CD8-positive, alpha-beta T cell (primary cell): ENCODE measurements at regions of chr7 and their contacts with region 1.

Region 1: DNA sequence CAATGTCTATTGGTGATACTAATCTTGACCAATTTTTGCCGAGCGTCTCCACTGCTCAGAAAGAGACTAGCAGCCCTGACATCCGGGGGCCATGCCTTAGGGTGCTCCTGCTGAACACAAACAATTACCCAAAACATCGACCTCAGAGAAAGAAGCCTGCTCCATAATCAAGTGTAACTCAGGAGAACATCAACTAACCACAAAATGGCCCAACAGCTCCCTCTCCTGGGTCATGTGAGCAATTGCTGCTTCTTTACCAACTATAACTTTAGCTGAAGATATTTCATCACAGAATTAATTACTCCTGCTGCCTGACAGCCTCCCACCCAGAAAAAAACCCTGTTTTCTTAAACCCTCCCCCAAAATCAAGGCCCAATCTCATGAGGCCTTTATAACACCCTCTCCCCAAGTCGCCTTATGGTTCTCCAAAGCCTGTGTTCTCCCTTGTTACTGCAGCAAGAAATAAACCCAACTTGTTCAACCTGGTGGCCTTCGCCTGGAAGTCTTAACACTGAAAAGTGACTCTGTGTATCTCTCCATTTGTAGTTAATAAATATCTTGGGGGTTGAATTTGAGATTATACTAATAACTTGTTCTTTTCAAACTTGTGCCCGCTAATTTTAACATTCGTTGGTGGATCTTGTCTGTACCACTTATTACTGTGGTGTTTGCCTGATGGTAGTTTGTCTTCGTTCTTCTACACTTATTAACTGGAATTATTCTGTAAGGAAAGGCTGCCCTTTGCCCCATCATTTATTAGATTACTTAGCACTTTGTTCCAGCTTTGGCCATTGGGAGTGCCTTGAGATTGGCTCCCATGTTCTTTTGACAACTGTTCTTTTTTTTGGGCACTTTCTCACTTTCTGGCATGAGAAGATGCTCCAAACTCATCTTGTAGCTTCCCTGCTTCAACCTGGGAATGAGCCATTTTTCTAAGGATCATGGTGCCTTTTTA is 21.2 kb upstream of the RAMP3 start:
- DNase-seq: peak; percentile 41 to 89 (median 66)
- ATAC-seq: peak; percentile 97
- H3K4me3 ChIP-seq: no peak overlapping the region
- H3K4me3 Mint-ChIP-seq: no peak overlapping the region
- H3K27ac ChIP-seq: no peak overlapping the region
- H3K27ac Mint-ChIP-seq: no peak overlapping the region
- H3K4me1 ChIP-seq: peaks cover 3% of the 10 kb centered on the region
- H3K4me1 Mint-ChIP-seq: peaks cover 4% of the 10 kb centered on the region
- H3K27me3 ChIP-seq: no peaks in the 10 kb centered on the region
- H3K27me3 Mint-ChIP-seq: peaks cover 4% of the 10 kb centered on the region
- CTCF ChIP-seq: peak; percentile 92

Region 2: DNA sequence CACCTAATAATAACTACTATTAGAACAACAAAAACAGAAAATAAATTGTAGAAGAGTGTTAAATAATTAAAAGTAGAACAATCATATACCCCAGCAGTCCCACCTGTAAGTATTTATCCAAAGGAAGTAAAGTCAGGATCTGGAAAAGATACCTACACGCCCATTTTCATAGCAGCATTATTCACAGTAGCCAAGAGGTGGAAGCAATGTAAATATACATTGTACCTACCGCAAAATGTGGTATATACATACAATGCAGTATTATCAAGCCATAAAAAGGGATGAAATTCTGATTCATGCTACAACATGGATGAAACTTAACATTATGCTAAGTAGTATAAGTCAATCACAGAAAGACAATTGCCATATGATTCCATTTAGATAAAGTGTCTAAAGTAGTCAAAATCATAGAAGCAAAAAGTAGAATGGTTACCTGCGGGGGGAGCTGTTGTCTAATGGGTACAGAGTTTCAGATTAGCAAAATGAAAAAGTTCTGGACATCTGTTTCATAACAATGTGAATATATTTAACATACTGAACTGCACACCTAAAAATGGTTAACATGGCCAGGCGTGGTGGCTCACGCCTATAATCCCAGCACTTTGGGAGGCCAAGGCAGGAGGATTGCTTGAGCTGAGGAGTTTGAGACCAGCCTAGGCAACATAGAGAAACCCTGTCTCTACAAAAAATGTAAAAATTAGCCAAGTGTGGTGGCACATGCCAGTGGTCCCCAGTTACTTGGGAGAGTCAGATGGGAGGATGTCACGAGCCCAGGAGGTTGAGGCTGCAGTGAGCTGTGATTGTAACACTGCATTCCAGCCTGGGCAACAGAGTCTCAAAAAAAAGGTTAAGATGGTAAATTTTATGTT is 548.3 kb before region 1 on chr7:
- CTCF ChIA-PET with region 1: interaction called, 8 read pairs
- POLR2A ChIA-PET with region 1: no interaction called
- intact Hi-C with region 1: loop called (anchors 1 to 2 kb)
- DNase-seq: peak; percentile 34 to 79 (median 63)
- ATAC-seq: peak; percentile 81
- H3K4me3 ChIP-seq: no peak overlapping the region
- H3K4me3 Mint-ChIP-seq: no peak overlapping the region
- H3K27ac ChIP-seq: no peak overlapping the region
- H3K27ac Mint-ChIP-seq: no peak overlapping the region
- H3K4me1 ChIP-seq: no peaks in the 10 kb centered on the region
- H3K4me1 Mint-ChIP-seq: peaks cover 6% of the 10 kb centered on the region
- H3K27me3 ChIP-seq: no peaks in the 10 kb centered on the region
- H3K27me3 Mint-ChIP-seq: no peaks in the 10 kb centered on the region
- CTCF ChIP-seq: peak; percentile 68

Region 3: GRCh38 chr7:44921607-44922359 is 214.6 kb before region 1 on chr7:
- CTCF ChIA-PET with region 1: interaction called, 40 read pairs
- POLR2A ChIA-PET with region 1: interaction called, 4 read pairs
- intact Hi-C with region 1: loop called (anchors 1 to 5 kb)
- DNase-seq: peak; percentile 88 to 99 (median 92)
- ATAC-seq: peak; percentile 94
- H3K4me3 ChIP-seq: no peak overlapping the region
- H3K4me3 Mint-ChIP-seq: no peak overlapping the region
- H3K27ac ChIP-seq: no peak overlapping the region
- H3K27ac Mint-ChIP-seq: no peak overlapping the region
- H3K4me1 ChIP-seq: no peaks in the 10 kb centered on the region
- H3K4me1 Mint-ChIP-seq: peaks cover 5% of the 10 kb centered on the region
- H3K27me3 ChIP-seq: peaks cover 0 to 2% of the 10 kb centered on the region in 2 experiments
- H3K27me3 Mint-ChIP-seq: peaks cover under 1% of the 10 kb centered on the region
- CTCF ChIP-seq: peak; percentile 87

Region 4: GRCh38 chr7:44980393-44981034 is 155.9 kb before region 1 on chr7:
- CTCF ChIA-PET with region 1: interaction called, 157 read pairs
- POLR2A ChIA-PET with region 1: interaction called, 3 read pairs
- intact Hi-C with region 1: no loop called
- DNase-seq: peak in 6 of 9 experiments; percentile 40 to 95 (median 76)
- ATAC-seq: peak; percentile 43
- H3K4me3 ChIP-seq: no peak overlapping the region
- H3K4me3 Mint-ChIP-seq: peak overlapping the region; percentile 94
- H3K27ac ChIP-seq: peak overlapping the region; percentile 78 to 86
- H3K27ac Mint-ChIP-seq: peak overlapping the region; percentile 99
- H3K4me1 ChIP-seq: peaks cover 72% of the 10 kb centered on the region
- H3K4me1 Mint-ChIP-seq: peaks cover 80% of the 10 kb centered on the region
- H3K27me3 ChIP-seq: no peaks in the 10 kb centered on the region
- H3K27me3 Mint-ChIP-seq: no peaks in the 10 kb centered on the region
- CTCF ChIP-seq: no peak

Region 5: GRCh38 chr7:45033261-45033930 is 103.0 kb before region 1 on chr7:
- CTCF ChIA-PET with region 1: interaction called, 13 read pairs
- POLR2A ChIA-PET with region 1: no interaction called
- intact Hi-C with region 1: no loop called
- DNase-seq: peak in 3 of 9 experiments; percentile 20 to 53 (median 34)
- ATAC-seq: peak; percentile 34
- H3K4me3 ChIP-seq: peak overlapping the region in 1 of 2 experiments; percentile 18
- H3K4me3 Mint-ChIP-seq: peak overlapping the region; percentile 75
- H3K27ac ChIP-seq: peak overlapping the region; percentile 11 to 51
- H3K27ac Mint-ChIP-seq: peak overlapping the region; percentile 91
- H3K4me1 ChIP-seq: peaks cover 77% of the 10 kb centered on the region
- H3K4me1 Mint-ChIP-seq: peaks cover 80% of the 10 kb centered on the region
- H3K27me3 ChIP-seq: no peaks in the 10 kb centered on the region
- H3K27me3 Mint-ChIP-seq: no peaks in the 10 kb centered on the region
- CTCF ChIP-seq: no peak

Region 6: GRCh38 chr7:45080265-45080962 is 56.0 kb before region 1 on chr7:
- CTCF ChIA-PET with region 1: interaction called, 19 read pairs
- POLR2A ChIA-PET with region 1: no interaction called
- intact Hi-C with region 1: loop called (anchors 1 kb)
- DNase-seq: no peak
- ATAC-seq: peak; percentile 38
- H3K4me3 ChIP-seq: no peak overlapping the region
- H3K4me3 Mint-ChIP-seq: no peak overlapping the region
- H3K27ac ChIP-seq: no peak overlapping the region
- H3K27ac Mint-ChIP-seq: peak overlapping the region; percentile 76
- H3K4me1 ChIP-seq: no peaks in the 10 kb centered on the region
- H3K4me1 Mint-ChIP-seq: peaks cover 3% of the 10 kb centered on the region
- H3K27me3 ChIP-seq: no peaks in the 10 kb centered on the region
- H3K27me3 Mint-ChIP-seq: no peaks in the 10 kb centered on the region
- CTCF ChIP-seq: no peak

Region 7: GRCh38 chr7:45117383-45117981 is 18.9 kb before region 1 on chr7:
- CTCF ChIA-PET with region 1: interaction called, 16 read pairs
- POLR2A ChIA-PET with region 1: no interaction called
- intact Hi-C with region 1: loop called in 1 of 2 experiments (anchors 2 kb)
- DNase-seq: no peak
- ATAC-seq: no peak
- H3K4me3 ChIP-seq: no peak overlapping the region
- H3K4me3 Mint-ChIP-seq: no peak overlapping the region
- H3K27ac ChIP-seq: no peak overlapping the region
- H3K27ac Mint-ChIP-seq: no peak overlapping the region
- H3K4me1 ChIP-seq: peaks cover 7% of the 10 kb centered on the region
- H3K4me1 Mint-ChIP-seq: peaks cover 6% of the 10 kb centered on the region
- H3K27me3 ChIP-seq: no peaks in the 10 kb centered on the region
- H3K27me3 Mint-ChIP-seq: peaks cover 2% of the 10 kb centered on the region
- CTCF ChIP-seq: no peak

Region 8: GRCh38 chr7:45259966-45260646 is 123.7 kb after region 1 on chr7:
- CTCF ChIA-PET with region 1: no interaction called
- POLR2A ChIA-PET with region 1: no interaction called
- intact Hi-C with region 1: no loop called
- DNase-seq: peak; percentile 36 to 81 (median 63)
- ATAC-seq: peak; percentile 57
- H3K4me3 ChIP-seq: no peak overlapping the region
- H3K4me3 Mint-ChIP-seq: no peak overlapping the region
- H3K27ac ChIP-seq: no peak overlapping the region
- H3K27ac Mint-ChIP-seq: no peak overlapping the region
- H3K4me1 ChIP-seq: peaks cover 4% of the 10 kb centered on the region
- H3K4me1 Mint-ChIP-seq: peaks cover 5% of the 10 kb centered on the region
- H3K27me3 ChIP-seq: no peaks in the 10 kb centered on the region
- H3K27me3 Mint-ChIP-seq: peaks cover 20% of the 10 kb centered on the region
- CTCF ChIP-seq: peak; percentile 97